ENCODE measurements at regions of chr11 and their contacts with region 1.

Region 1: GRCh38 chr11:64358907-64359711 is at the start of gene RPS6KA4:
- DNase-seq: no peak
- ATAC-seq: peak; percentile 65
- H3K4me3 ChIP-seq: peak within 1 kb of the TSS; percentile 84 to 97
- H3K27ac ChIP-seq: peak within 1 kb of the TSS; percentile 87
- H3K4me1 ChIP-seq: peaks cover 28 to 61% of the 10 kb centered on the region in 2 experiments
- H3K27me3 ChIP-seq: no peaks in the 10 kb centered on the region
- CTCF ChIP-seq: no peak
- POLR2A ChIP-seq: peak; percentile 68
- RAD21 ChIP-seq: no peak
- total RNA-seq, gene RPS6KA4: 67.3 TPM

Region 2: GRCh38 chr11:64185816-64186498 is 173.2 kb before region 1 on chr11 and contains the start of gene STIP1:
- CTCF ChIA-PET with region 1: interaction called, 11 read pairs
- POLR2A ChIA-PET with region 1: interaction called, 7 read pairs
- RAD21 ChIA-PET with region 1: interaction called in 1 of 2 experiments, 3 read pairs
- intact Hi-C with region 1: no loop called
- DNase-seq: peak; percentile 100
- ATAC-seq: peak; percentile 87
- H3K4me3 ChIP-seq: peak within 1 kb of the TSS; percentile 81 to 88
- H3K27ac ChIP-seq: peak within 1 kb of the TSS; percentile 90
- H3K4me1 ChIP-seq: peaks cover 26 to 48% of the 10 kb centered on the region in 2 experiments
- H3K27me3 ChIP-seq: no peaks in the 10 kb centered on the region
- CTCF ChIP-seq: peak in 2 of 3 experiments; percentile 15 to 29; a peak in 1 of 6 replicates
- POLR2A ChIP-seq: peak; percentile 19
- RAD21 ChIP-seq: no peak
- total RNA-seq, gene STIP1: 336 TPM

Region 3: DNA sequence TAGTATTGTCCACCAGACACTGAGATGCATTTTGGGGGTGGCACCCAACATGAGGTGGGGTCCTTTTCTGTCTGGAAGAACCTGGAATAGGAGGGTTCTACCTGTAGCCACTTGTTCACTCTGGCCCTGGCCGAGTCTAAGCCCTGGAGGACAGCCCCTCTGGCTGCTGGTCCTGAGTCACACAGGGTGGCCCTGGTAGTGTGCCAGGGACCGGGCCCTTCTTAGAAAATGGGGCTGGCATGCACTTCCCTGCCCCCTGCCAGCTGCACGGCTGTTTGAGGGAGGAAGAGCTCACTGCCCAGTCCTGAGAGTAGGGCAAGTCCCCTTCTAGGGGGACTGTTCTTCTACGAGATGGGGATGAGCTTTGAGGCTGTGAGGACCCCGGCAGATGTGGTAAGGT is 105.6 kb before region 1 on chr11:
- CTCF ChIA-PET with region 1: interaction called, 6 read pairs
- POLR2A ChIA-PET with region 1: interaction called, 3 read pairs
- RAD21 ChIA-PET with region 1: interaction called in 1 of 2 experiments, 15 read pairs
- intact Hi-C with region 1: no loop called
- DNase-seq: no peak
- ATAC-seq: no peak
- H3K4me3 ChIP-seq: no peak overlapping the region
- H3K27ac ChIP-seq: peak overlapping the region; percentile 15; the same call in 1 of the 2 replicates
- H3K4me1 ChIP-seq: peaks cover 19 to 52% of the 10 kb centered on the region in 2 experiments
- H3K27me3 ChIP-seq: no peaks in the 10 kb centered on the region
- CTCF ChIP-seq: no peak
- POLR2A ChIP-seq: no peak
- RAD21 ChIP-seq: no peak

Region 4: DNA sequence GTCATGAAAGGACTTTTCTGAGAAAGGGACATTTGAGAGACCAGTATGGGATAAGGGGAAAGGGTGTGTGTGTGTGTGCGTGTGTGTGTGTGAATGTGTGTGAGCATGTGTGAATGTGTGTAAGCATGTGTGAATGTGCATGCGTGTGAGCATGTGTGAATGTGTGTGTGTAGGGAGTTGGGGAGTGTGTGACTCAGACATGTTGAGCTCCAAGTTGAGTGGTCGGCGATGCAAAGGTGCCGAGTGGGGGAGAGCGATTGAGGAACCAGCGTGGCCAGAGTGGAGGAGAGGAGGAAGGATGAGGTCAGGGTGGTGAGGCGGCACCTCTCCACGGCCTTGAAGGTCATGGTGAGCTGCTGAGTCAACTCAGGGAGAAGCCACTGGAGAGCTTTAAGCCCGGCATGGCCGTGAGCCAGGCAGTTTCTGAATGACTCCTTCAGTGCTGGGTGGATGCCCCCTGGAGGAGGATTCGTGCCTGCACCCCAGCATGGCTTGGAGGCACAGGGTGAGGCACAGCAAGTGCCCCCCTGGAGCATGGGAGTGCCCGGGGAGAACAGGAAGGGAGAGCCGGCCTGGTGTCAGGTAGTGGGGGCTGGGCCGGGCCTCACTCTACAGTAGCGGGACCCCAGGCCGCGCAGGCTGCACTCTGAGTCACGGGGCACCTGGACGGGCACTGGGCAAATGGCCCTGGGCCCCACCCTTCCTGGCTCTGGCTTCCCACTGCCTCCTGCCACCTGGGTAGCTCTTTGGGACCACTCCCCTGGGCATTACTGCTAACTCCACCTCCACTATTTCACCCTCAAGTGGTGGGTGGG is 27.3 kb before region 1 on chr11:
- CTCF ChIA-PET with region 1: interaction called, 46 read pairs
- POLR2A ChIA-PET with region 1: interaction called, 7 read pairs
- RAD21 ChIA-PET with region 1: interaction called, 5 to 10 read pairs
- intact Hi-C with region 1: no loop called
- DNase-seq: peak; percentile 83
- ATAC-seq: peak; percentile 74
- H3K4me3 ChIP-seq: peak overlapping the region; percentile 19 to 37
- H3K27ac ChIP-seq: peak overlapping the region; percentile 68
- H3K4me1 ChIP-seq: peaks cover 29 to 53% of the 10 kb centered on the region in 2 experiments
- H3K27me3 ChIP-seq: no peaks in the 10 kb centered on the region
- CTCF ChIP-seq: peak in 2 of 3 experiments; percentile 74 to 89; a peak in 4 of 6 replicates
- POLR2A ChIP-seq: peak; percentile 43
- RAD21 ChIP-seq: no peak

Region 5: GRCh38 chr11:64448599-64449556 is 89.8 kb after region 1 on chr11:
- CTCF ChIA-PET with region 1: interaction called, 24 read pairs
- POLR2A ChIA-PET with region 1: interaction called, 7 read pairs
- RAD21 ChIA-PET with region 1: interaction called in 1 of 2 experiments, 4 read pairs
- intact Hi-C with region 1: loop called (anchors 5 kb)
- DNase-seq: peak; percentile 72
- ATAC-seq: peak; percentile 92
- H3K4me3 ChIP-seq: peak overlapping the region; percentile 48 to 59
- H3K27ac ChIP-seq: no peak overlapping the region; the same call in 1 of the 2 replicates
- H3K4me1 ChIP-seq: peaks cover 14 to 23% of the 10 kb centered on the region in 2 experiments
- H3K27me3 ChIP-seq: no peaks in the 10 kb centered on the region
- CTCF ChIP-seq: peak; percentile 88 to 94 (median 91)
- POLR2A ChIP-seq: no peak
- RAD21 ChIP-seq: peak; percentile 75

Region 6: DNA sequence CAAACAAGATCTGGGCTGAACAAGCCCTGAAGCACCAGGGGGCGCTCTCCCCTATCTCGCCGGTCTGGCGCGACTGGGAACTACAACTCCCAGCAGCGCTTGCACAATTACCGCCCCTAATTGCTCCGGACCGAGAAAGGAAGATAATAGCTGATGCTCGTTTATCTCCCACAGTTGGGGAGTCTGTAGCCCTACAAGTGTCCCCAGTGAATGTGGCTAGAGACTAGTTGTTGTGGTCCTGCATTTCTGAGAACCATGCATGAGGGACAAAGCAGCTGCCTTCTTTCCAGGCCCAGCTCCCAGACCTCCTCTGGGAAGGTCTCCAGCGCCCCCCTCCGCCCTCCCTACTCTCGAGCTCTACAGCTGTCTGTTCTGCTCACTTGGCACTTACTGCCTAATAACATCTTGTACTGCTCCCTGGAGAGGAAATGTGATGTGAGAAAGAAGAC is 329.4 kb after region 1 on chr11:
- CTCF ChIA-PET with region 1: interaction called, 16 read pairs
- POLR2A ChIA-PET with region 1: no interaction called
- RAD21 ChIA-PET with region 1: no interaction called
- intact Hi-C with region 1: no loop called
- DNase-seq: peak; percentile 83
- ATAC-seq: peak; percentile 97
- H3K4me3 ChIP-seq: peak overlapping the region; percentile 27 to 49
- H3K27ac ChIP-seq: no peak overlapping the region
- H3K4me1 ChIP-seq: peaks cover 0 to 11% of the 10 kb centered on the region in 2 experiments; a peak in 2 of 4 replicates
- H3K27me3 ChIP-seq: no peaks in the 10 kb centered on the region
- CTCF ChIP-seq: peak; percentile 91 to 98 (median 93)
- POLR2A ChIP-seq: no peak
- RAD21 ChIP-seq: peak; percentile 76